H1 (cell line): ENCODE measurements at regions of chr16 and their contacts with region 1.

Region 1: GRCh38 chr16:87806603-87807546 is 41.1 kb upstream of the KLHDC4 start:
- DNase-seq: peak in 1 of 2 experiments; percentile 61
- H3K4me3 ChIP-seq: no peak overlapping the region
- H3K27ac ChIP-seq: no peak overlapping the region
- H3K4me1 ChIP-seq: peaks cover 0 to 14% (median 0%) of the 10 kb centered on the region in 4 experiments; a peak in 2 of 7 replicates
- H3K27me3 ChIP-seq: no peaks in the 10 kb centered on the region
- CTCF ChIP-seq: no peak
- EP300 ChIP-seq: no peak
- POLR2A ChIP-seq: no peak
- RAD21 ChIP-seq: no peak

Region 2: DNA sequence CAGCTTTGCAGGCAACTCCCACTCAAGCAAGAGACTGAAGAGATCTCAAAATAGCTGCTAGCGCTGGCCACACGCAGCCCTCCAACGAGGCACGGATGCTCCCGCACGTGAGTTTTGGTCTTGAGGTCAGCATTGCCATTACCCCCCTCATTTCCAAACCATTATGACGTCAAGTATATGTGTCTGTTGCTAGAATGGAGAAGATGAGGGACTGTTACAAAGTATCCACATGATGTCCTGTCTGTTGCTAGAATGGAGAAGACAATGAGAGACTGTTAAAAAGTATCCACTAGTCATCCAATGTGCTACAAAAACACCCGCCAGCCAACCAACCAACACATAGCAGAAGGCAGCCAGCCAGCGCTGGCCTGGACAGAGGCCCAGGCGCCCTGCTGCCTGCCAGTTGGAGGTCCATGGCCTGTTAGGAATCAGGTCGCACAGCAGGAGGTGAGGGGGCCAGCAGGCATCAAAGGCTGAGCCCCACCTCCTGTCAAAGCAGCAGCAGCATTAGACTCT is 65.9 kb before region 1 on chr16:
- CTCF ChIA-PET with region 1: no interaction called
- POLR2A ChIA-PET with region 1: no interaction called
- DNase-seq: no peak
- H3K4me3 ChIP-seq: no peak overlapping the region
- H3K27ac ChIP-seq: no peak overlapping the region
- H3K4me1 ChIP-seq: no peaks in the 10 kb centered on the region
- H3K27me3 ChIP-seq: no peaks in the 10 kb centered on the region
- CTCF ChIP-seq: no peak
- EP300 ChIP-seq: no peak
- POLR2A ChIP-seq: no peak
- RAD21 ChIP-seq: no peak

Region 3: DNA sequence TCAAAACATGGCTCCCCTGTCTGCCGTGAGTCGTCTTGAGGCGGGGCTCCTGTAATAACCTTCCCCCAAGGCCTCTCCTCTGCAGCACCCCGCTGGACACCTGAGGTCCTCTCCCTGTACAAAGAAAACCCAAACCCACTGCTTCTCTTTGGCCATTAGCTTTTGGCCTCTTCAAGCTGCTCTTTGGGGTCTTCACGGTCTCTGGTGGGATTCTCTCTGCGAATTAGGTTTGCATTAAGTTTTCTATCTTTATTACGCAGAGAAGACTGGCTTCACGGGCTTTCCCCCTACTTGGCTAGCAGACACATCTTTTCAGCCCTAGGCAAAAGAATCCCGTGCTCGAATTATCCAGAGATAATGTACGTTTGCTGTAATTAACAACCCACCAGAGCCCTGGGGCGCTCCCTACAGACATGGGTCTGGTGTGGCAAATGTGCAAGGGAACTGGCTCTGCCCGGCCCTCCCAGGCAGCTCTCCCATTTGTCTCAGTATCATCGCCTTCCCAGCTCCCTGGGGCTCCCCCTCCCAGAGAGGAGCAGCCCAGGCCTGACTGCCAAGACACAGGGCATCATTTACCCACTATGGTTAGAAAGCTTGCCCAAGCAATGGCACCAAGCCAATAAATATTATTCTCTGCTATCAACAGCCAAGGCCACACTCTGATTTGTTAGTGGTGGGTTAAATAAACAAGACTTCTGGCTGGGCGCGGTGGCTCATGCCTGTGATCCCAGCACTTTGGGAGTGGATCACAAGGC is 16.4 kb before region 1 on chr16:
- CTCF ChIA-PET with region 1: interaction called, 11 read pairs
- POLR2A ChIA-PET with region 1: interaction called, 7 read pairs
- DNase-seq: no peak
- H3K4me3 ChIP-seq: no peak overlapping the region
- H3K27ac ChIP-seq: no peak overlapping the region
- H3K4me1 ChIP-seq: no peaks in the 10 kb centered on the region
- H3K27me3 ChIP-seq: no peaks in the 10 kb centered on the region
- CTCF ChIP-seq: no peak
- EP300 ChIP-seq: no peak
- POLR2A ChIP-seq: no peak
- RAD21 ChIP-seq: no peak